ENCODE measurements at regions of chr19 and their contacts with region 1.

Region 1: GRCh38 chr19:4089400-4089908 is 22.8 kb upstream of the ZBTB7A start:
- DNase-seq: peak in 7 of 9 donors; percentile 16 to 69 (median 26)
- ATAC-seq: peak; percentile 79
- H3K4me3 ChIP-seq: peak overlapping the region; percentile 27
- H3K4me3 Mint-ChIP-seq: peak overlapping the region; percentile 76 to 83 (median 79)
- H3K27ac ChIP-seq: peak overlapping the region; percentile 67
- H3K27ac Mint-ChIP-seq: peak overlapping the region; percentile 82 to 97 (median 94)
- H3K4me1 ChIP-seq: peaks cover 46% of the 10 kb centered on the region in 2 donors
- H3K4me1 Mint-ChIP-seq: peaks cover 23 to 53% (median 47%) of the 10 kb centered on the region in 7 donors
- H3K27me3 ChIP-seq: no peaks in the 10 kb centered on the region
- H3K27me3 Mint-ChIP-seq: no peaks in the 10 kb centered on the region

Region 2: GRCh38 chr19:3932931-3933810 is 156.3 kb before region 1 on chr19 and contains the start of gene NMRK2:
- CTCF ChIA-PET with region 1: no interaction called
- POLR2A ChIA-PET with region 1: no interaction called
- intact Hi-C with region 1: no loop called
- DNase-seq: no peak
- ATAC-seq: no peak
- H3K4me3 ChIP-seq: no peak within 1 kb of the TSS
- H3K4me3 Mint-ChIP-seq: no peak within 1 kb of the TSS
- H3K27ac ChIP-seq: no peak within 1 kb of the TSS
- H3K27ac Mint-ChIP-seq: no peak within 1 kb of the TSS
- H3K4me1 ChIP-seq: no peaks in the 10 kb centered on the region
- H3K4me1 Mint-ChIP-seq: no peaks in the 10 kb centered on the region
- H3K27me3 ChIP-seq: no peaks in the 10 kb centered on the region
- H3K27me3 Mint-ChIP-seq: peaks cover 10 to 32% (median 11%) of the 10 kb centered on the region in 5 donors
- total RNA-seq, gene NMRK2: not detected

Region 3: GRCh38 chr19:4077882-4078614 is 11.4 kb before region 1 on chr19:
- CTCF ChIA-PET with region 1: interaction called, 7 read pairs
- POLR2A ChIA-PET with region 1: interaction called, 10 read pairs
- intact Hi-C with region 1: no loop called
- DNase-seq: peak in 7 of 9 donors; percentile 35 to 70 (median 47)
- ATAC-seq: peak; percentile 71
- H3K4me3 ChIP-seq: peak overlapping the region; percentile 68
- H3K4me3 Mint-ChIP-seq: peak overlapping the region; percentile 82 to 89 (median 87)
- H3K27ac ChIP-seq: peak overlapping the region; percentile 86
- H3K27ac Mint-ChIP-seq: peak overlapping the region; percentile 85 to 97 (median 88)
- H3K4me1 ChIP-seq: peaks cover 15 to 24% of the 10 kb centered on the region in 2 donors
- H3K4me1 Mint-ChIP-seq: peaks cover 17 to 46% (median 33%) of the 10 kb centered on the region in 7 donors
- H3K27me3 ChIP-seq: no peaks in the 10 kb centered on the region
- H3K27me3 Mint-ChIP-seq: no peaks in the 10 kb centered on the region

Region 4: DNA sequence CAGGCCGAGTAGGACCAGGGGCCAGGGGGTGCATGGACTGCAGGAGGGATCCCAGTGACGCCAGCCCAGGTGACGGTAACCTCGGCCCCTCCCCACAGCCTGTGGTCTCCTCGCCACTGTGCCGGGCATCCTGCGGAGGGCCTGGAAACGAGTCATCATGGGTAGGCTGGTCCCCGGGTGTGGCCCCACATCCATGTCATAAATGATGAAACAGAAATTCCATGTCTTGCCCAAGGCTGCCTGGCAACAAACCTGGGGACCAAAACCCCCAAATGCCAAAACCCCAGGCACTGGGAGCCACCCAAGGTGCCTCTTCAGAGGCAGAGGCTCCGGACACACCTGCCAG is 13.6 kb after region 1 on chr19:
- CTCF ChIA-PET with region 1: interaction called, 4 read pairs
- POLR2A ChIA-PET with region 1: interaction called, 40 read pairs
- intact Hi-C with region 1: loop called (anchors 1 kb)
- DNase-seq: no peak
- ATAC-seq: no peak
- H3K4me3 ChIP-seq: no peak overlapping the region
- H3K4me3 Mint-ChIP-seq: peak overlapping the region in 1 of 10 donors; percentile 67
- H3K27ac ChIP-seq: no peak overlapping the region
- H3K27ac Mint-ChIP-seq: peak overlapping the region in 2 of 9 donors; percentile 64 to 85
- H3K4me1 ChIP-seq: peaks cover 22 to 33% of the 10 kb centered on the region in 2 donors
- H3K4me1 Mint-ChIP-seq: peaks cover 20 to 44% (median 32%) of the 10 kb centered on the region in 7 donors
- H3K27me3 ChIP-seq: no peaks in the 10 kb centered on the region
- H3K27me3 Mint-ChIP-seq: no peaks in the 10 kb centered on the region

Region 5: DNA sequence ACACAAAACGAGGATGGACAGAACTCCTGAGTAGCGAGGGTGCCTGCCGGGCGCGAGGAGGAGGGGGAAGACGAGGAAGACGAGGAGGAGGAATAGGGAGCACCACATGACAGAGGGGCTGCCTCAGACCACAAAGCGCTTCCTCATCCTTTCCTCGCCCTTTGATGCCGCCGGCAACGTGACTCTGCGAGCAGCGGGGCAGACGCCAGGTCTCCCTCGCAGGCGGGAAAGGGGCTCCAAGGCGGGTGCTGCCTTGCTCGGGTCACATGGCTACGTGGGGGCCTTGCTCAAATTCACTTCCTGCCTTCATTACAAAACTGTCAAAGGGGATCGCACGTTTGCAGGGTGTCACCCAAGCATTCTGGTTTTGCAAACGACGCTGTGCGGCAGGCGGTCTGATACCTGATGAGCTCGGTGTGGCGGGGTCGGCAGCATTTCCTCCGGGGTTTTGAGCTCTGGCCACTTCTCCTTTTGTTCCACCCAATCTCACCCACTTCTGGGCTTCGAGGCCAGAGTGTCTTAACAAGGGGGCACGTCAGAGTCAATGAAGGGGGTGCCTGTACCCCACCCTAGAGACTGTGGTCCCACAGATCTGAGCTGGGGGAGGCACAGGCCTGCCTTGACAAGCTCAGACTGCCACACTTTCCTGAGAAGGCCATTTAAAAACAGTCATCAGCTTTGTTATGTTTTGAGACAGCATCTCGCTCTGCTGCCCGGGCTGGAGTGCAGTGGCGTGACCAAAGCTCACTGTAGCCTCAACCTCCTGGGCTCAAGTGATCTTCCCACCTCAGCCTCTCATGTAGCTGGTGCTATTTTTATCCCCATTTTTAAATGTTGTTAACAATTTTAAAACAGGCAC is 19.5 kb after region 1 on chr19:
- CTCF ChIA-PET with region 1: interaction called, 4 read pairs
- POLR2A ChIA-PET with region 1: interaction called, 40 read pairs
- intact Hi-C with region 1: loop called (anchors 1 kb)
- DNase-seq: peak; percentile 35 to 83 (median 79)
- ATAC-seq: peak; percentile 67
- H3K4me3 ChIP-seq: peak overlapping the region; percentile 11
- H3K4me3 Mint-ChIP-seq: peak overlapping the region; percentile 54 to 80 (median 74)
- H3K27ac ChIP-seq: peak overlapping the region; percentile 72
- H3K27ac Mint-ChIP-seq: peak overlapping the region; percentile 86 to 97 (median 94)
- H3K4me1 ChIP-seq: peaks cover 44 to 53% of the 10 kb centered on the region in 2 donors
- H3K4me1 Mint-ChIP-seq: peaks cover 34 to 85% (median 55%) of the 10 kb centered on the region in 7 donors
- H3K27me3 ChIP-seq: no peaks in the 10 kb centered on the region
- H3K27me3 Mint-ChIP-seq: no peaks in the 10 kb centered on the region

Region 6: DNA sequence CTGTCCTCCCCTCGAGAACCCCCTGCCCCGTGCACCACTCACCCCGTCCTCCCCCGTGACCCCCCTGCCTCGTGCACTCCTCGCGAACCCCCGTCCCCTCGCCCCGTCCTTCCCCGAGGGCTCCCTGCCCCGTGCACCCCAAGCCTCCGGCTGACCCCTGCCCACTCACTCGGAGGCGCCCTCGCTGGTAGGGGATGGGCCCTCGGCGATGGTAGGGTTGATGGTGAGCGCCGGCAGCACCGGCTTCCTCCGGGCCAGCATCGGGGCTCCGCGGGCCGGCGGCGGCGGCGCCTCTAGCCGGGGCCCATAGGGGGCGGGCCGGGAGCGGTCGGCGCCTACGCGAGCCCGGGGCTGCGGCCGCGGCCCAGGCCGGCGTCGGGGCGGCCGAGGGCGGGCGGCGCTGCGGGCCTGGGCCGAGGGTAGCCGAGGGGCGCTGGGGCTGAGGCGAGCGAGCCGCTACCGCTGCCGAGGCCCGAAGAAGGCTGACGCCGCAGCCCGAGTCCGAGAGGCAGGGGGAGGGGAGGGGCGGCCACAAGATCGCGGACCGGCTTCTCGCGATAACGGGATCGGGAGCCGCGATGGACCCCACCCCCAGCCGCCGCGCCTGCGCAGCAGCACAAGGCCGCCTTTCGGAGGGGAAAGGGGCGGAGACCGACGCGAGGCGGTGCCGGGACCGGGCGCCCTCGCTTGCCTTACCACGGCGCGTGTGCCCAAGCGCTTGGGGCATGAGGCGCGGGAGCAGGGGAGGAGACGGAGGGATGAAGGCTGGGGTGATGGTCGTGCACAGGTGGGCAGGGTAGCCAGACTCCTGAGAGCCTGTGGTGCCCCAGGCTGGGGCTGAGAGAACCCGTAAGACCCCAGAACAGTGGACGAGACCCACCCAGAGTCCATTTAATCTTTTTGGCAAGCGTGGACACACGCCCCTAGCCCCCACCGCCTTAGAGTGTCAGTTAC is 34.4 kb after region 1 on chr19 and contains the start of gene MAP2K2:
- CTCF ChIA-PET with region 1: no interaction called
- POLR2A ChIA-PET with region 1: interaction called, 3 read pairs
- intact Hi-C with region 1: loop called in 1 of 2 experiments (anchors 1 kb)
- DNase-seq: peak; percentile 91 to 99 (median 96)
- ATAC-seq: peak; percentile 96
- H3K4me3 ChIP-seq: peak within 1 kb of the TSS; percentile 77
- H3K4me3 Mint-ChIP-seq: peak within 1 kb of the TSS; percentile 89 to 100 (median 94)
- H3K27ac ChIP-seq: peak within 1 kb of the TSS; percentile 80
- H3K27ac Mint-ChIP-seq: peak within 1 kb of the TSS; percentile 89 to 97 (median 93)
- H3K4me1 ChIP-seq: peaks cover 10 to 11% of the 10 kb centered on the region in 2 donors
- H3K4me1 Mint-ChIP-seq: peaks cover 17 to 31% (median 25%) of the 10 kb centered on the region in 7 donors
- H3K27me3 ChIP-seq: no peaks in the 10 kb centered on the region
- H3K27me3 Mint-ChIP-seq: no peaks in the 10 kb centered on the region
- total RNA-seq, gene MAP2K2: 87.4 to 162 (median 123) TPM

Region 7: DNA sequence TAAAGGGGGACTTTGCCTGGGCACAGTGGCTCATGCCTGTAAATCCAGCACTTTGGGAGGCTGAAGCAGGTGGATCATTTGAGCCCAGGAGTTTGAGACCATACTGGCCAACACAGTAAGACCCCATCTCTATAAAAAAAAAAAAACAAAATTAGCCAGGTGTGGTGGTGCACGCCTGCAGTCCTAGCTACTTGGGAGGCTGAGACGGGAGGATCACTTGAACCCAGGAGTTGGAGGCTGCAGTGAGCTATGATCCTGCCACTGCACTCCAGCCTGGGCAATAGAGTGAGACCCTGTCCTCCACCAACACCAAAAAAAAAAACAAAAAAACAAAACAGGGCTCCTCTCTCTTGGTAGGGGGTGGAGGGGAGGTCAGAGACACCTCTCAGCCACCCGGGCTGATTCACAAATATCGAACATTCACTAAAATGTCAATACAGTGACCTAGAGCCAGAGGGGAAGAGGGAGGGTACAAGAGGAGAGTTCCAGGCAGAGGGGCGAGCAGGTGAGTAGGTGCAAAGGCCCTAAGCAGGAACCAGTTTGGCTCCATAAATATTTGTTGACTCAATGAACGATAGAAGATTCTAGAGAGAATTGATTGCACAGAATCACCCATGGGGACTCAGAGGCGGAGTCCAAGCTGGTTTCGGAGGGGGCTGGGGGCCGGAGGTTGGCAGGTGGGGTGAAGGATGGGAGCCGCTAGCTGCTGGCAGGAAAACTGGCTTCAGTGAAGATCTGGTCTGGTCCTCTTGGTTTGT is 63.0 kb after region 1 on chr19:
- CTCF ChIA-PET with region 1: no interaction called
- POLR2A ChIA-PET with region 1: no interaction called
- intact Hi-C with region 1: no loop called
- DNase-seq: no peak
- ATAC-seq: no peak
- H3K4me3 ChIP-seq: no peak overlapping the region
- H3K4me3 Mint-ChIP-seq: no peak overlapping the region
- H3K27ac ChIP-seq: no peak overlapping the region
- H3K27ac Mint-ChIP-seq: no peak overlapping the region
- H3K4me1 ChIP-seq: peaks cover 0 to 5% of the 10 kb centered on the region in 2 donors
- H3K4me1 Mint-ChIP-seq: peaks cover 0 to 13% (median 0%) of the 10 kb centered on the region in 7 donors
- H3K27me3 ChIP-seq: no peaks in the 10 kb centered on the region
- H3K27me3 Mint-ChIP-seq: peaks cover 0 to 10% (median 6%) of the 10 kb centered on the region in 5 donors

Measured in naive thymus-derived CD4-positive, alpha-beta T cell (primary cell).